ENCODE measurements at regions of chr1 and their contacts with region 1.

Region 1: DNA sequence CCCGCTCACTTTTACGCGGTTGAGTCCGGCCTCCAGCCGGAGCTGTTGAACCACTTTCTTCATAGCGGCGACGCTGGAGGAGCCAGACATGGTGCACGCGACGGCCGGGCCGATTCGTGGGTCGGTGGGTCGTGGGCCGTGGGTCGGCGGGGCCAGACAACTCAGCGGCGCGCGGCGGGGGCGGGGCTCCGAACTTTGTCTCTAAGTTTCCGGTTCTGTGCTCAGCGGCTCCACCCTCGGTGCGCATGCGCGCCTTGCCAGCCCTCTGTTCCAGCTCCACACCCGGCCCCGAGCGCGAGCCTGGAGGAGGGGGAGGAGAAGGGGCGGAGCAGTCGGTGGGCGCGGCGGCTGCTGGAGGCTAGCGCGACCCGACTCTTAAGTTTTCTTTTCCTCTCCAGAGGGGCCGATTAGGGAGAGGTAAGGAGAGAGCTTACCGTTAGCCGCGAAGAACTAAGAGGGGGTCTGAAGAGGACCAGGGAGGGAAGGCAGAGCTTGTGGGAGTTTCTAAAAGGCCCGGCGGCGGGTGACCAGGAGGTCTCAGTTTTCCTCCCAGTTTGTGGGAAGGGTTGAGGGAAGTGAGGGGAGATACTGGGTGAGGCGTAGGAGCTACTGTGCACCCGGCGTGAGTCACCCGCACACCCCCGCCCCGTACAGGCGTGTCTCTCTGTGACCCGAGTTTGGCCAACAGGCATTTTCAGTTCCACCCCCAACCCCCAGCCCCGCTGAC is at the starts of genes GNG5 and SPATA1:
- DNase-seq: peak; percentile 97
- CTCF ChIP-seq: no peak

Region 2: GRCh38 chr1:84236256-84236655 is 269.9 kb before region 1 on chr1:
- CTCF ChIA-PET with region 1: no interaction called
- POLR2A ChIA-PET with region 1: no interaction called
- DNase-seq: no peak
- CTCF ChIP-seq: no peak

Region 3: DNA sequence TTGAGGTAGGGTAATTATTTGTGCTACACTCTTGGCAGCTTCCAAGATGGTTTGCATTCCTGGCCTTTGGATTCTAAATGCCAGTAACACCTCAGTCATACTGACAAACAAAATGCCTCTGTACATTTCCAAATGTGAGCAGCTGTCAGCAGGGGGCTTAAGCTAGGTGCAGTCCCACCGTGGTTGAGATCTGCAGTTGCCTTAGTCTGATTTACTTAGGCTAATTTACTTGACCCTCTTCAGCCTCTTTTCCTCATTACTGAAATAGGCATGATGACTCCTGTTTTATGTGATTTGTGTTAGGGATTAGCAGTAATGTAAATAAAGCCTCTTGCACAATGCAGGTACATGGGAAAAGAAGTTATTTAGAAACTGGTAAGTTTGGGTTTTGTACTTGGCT is 13.4 kb before region 1 on chr1:
- CTCF ChIA-PET with region 1: interaction called, 10 read pairs
- POLR2A ChIA-PET with region 1: interaction called, 5 read pairs
- DNase-seq: no peak
- CTCF ChIP-seq: no peak

Region 4: GRCh38 chr1:84550826-84551225 is 44.7 kb after region 1 on chr1:
- CTCF ChIA-PET with region 1: no interaction called
- POLR2A ChIA-PET with region 1: no interaction called
- DNase-seq: no peak
- CTCF ChIP-seq: no peak

Region 5: DNA sequence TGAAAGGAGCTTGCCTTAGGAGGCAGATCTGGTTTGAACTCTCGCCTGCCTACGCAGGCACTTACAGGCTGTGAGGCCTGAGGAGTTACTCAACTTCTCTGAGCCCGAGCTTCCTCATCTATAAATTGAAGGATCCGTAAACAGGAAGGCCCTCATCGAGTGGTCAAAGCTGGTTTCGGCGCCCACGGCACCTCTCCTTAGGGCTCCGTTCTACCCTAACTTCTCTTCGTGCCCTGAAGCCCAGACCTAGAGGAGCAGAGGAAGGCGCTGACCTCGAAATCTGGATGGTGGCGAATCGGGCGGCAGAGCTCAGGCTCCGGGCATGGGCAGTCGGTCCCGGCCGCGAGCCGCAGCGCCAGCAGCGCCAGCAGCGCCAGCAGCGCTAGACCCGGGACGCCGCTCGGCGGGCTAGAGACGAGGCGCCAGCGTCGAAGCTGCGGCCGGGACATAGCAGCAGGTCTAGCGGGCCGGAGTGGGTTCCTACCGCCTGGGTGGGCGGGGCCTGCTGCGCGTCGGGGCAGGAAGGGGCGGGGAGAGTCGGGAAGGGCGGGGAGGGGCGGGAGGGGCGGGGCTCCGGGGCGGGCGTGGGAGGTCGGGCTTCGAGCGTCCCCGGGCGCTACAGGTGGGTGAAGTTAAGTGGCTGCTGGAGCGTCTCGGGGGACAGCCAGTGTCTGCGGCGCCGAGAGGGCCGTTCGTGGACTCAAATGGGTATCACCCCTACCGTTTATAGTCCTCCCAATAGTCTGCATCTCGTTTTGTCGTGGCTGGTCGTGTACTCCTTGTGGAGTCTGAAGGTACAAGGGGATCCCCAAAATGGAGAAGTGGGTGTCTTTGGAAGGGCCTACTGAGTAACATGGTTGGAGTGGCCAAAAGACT is 68.0 kb after region 1 on chr1 and contains the start of gene CTBS:
- CTCF ChIA-PET with region 1: interaction called, 7 read pairs
- POLR2A ChIA-PET with region 1: interaction called, 18 read pairs
- DNase-seq: peak; percentile 98
- CTCF ChIP-seq: no peak